Psoas muscle (tissue), 8 donors: ENCODE measurements at regions of chr16 and their contacts with region 1.

Region 1: GRCh38 chr16:57147381-57148221 is 38.2 kb downstream of the PSME3IP1 start:
- DNase-seq: peak in 1 of 2 donors; percentile 38
- ATAC-seq: peak; percentile 55 to 79 (median 76)
- H3K4me3 ChIP-seq: no peak overlapping the region
- H3K27ac ChIP-seq: peak overlapping the region; percentile 41
- H3K4me1 ChIP-seq: peaks cover 21% of the 10 kb centered on the region
- H3K27me3 ChIP-seq: no peaks in the 10 kb centered on the region
- CTCF ChIP-seq: no peak

Region 2: GRCh38 chr16:56600398-56600999 is 547.1 kb before region 1 on chr16:
- intact Hi-C with region 1: no loop called
- DNase-seq: peak in 1 of 2 donors; percentile 28
- ATAC-seq: peak in 3 of 4 donors; percentile 26 to 34 (median 29)
- H3K4me3 ChIP-seq: no peak overlapping the region
- H3K27ac ChIP-seq: no peak overlapping the region
- H3K4me1 ChIP-seq: peaks cover 14% of the 10 kb centered on the region
- H3K27me3 ChIP-seq: no peaks in the 10 kb centered on the region
- CTCF ChIP-seq: peak; percentile 51

Region 3: DNA sequence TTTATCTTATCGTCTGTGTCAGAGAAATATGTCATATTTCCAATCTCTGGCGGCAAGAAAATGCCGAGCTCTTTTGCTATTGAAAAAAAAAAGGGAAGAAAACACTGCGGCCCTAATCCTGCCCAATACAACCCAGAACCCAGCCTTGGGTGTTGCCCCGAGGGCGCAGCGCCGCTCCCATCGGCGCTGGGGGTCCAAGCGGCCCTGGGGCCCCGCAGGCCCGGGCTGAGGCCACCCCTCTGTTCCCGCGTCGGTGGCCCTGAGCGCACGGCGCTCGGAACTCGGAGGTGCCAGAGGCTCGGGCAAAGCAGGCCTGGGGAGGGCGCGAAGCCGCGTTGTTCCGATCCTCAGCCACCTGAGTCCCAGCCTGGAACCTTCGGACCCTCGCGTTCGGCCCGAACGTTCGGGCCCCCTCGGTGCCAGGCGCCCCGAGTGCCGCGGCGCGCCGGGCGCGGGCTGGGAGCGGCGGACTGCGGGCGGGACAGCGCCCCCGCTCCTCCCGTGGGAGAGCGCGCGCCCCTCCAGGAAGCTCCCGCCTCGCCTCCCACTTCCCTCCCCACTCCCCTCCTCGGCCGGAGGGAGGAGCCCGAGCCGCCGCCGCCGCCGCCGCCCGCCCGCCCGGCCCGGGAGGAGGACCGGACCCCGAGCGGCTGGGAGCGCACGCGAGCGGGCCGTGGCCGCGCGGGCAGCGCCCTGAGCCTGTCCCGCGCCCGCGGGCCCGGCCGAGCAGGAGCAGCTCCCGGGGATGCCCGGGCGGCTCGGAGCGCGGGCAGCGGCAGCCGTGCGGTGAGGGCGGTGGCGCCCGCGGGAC is 55.4 kb before region 1 on chr16 and contains the start of gene CPNE2:
- intact Hi-C with region 1: loop called in 1 of 2 experiments (anchors 10 kb)
- DNase-seq: peak; percentile 66 to 80
- ATAC-seq: peak; percentile 71 to 91 (median 84)
- H3K4me3 ChIP-seq: peak within 1 kb of the TSS; percentile 81
- H3K27ac ChIP-seq: peak within 1 kb of the TSS; percentile 75
- H3K4me1 ChIP-seq: peaks cover 5% of the 10 kb centered on the region
- H3K27me3 ChIP-seq: no peaks in the 10 kb centered on the region
- CTCF ChIP-seq: no peak
- total RNA-seq, gene CPNE2: 8.1 to 12.4 (median 10.5) TPM

Region 4: DNA sequence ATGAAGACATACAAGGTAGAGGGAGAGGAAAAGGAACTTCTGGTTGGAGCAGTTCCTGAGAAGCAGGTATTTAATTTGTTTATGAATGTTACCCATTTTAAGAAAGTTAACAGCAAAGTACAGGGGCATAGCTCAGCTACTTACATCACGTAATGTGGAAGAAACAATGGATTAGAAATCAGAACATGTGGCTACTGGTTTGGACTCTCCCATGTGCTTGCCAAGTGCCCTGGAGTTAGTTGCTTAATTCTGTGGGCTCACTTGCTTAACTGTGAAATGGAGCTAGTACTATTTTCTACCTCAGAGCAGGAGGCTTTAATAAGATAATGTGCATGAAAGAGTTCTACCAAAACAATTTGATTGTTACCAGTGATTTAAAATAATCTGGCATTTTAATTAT is 65.9 kb after region 1 on chr16:
- intact Hi-C with region 1: loop called in 1 of 2 experiments (anchors 10 kb)
- DNase-seq: no peak
- ATAC-seq: no peak
- H3K4me3 ChIP-seq: no peak overlapping the region
- H3K27ac ChIP-seq: no peak overlapping the region
- H3K4me1 ChIP-seq: no peaks in the 10 kb centered on the region
- H3K27me3 ChIP-seq: no peaks in the 10 kb centered on the region
- CTCF ChIP-seq: no peak

Region 5: DNA sequence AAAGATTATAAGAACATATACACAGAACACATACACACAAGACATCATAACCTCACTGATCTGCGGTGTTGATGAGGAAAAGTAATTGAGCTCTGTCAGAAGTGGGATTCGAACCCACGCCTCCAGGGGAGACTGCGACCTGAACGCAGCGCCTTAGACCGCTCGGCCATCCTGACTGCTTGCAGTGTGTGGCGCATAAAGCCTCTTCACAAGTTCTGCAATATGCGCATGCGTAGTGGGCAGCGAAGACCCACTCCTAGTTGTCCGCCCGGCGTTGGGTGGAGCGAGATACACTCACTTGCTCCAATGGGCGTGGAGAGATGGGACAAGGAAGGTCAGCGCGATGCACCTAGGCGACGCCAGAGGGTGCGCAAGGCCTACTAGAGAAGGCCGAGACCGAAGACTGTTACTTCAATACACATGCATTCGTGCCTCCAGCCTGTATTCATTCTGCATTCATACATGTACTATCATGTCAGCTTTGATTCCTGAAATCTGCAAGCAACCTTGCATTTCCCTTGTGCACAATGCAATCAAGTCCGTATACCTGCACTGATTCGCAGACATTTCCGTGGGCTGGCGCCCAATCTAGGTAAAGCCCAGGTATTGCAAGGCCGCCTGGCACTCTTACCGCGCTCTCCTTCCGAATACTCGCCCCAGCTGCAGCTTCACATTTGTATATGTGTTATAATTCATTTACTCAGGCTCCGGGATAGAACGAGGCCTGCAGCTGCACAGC is 153.0 kb after region 1 on chr16:
- intact Hi-C with region 1: no loop called
- DNase-seq: peak; percentile 98 to 99
- ATAC-seq: peak; percentile 94 to 95 (median 94)
- H3K4me3 ChIP-seq: peak overlapping the region; percentile 62
- H3K27ac ChIP-seq: peak overlapping the region; percentile 84
- H3K4me1 ChIP-seq: peaks cover 15% of the 10 kb centered on the region
- H3K27me3 ChIP-seq: no peaks in the 10 kb centered on the region
- CTCF ChIP-seq: peak; percentile 96